Esophagus muscularis mucosa (tissue), 4 donors: ENCODE measurements at regions of chr9 and their contacts with region 1.

Region 1: GRCh38 chr9:5628530-5629311 is at the start of gene RIC1:
- DNase-seq: peak; percentile 98
- H3K4me3 ChIP-seq: peak within 1 kb of the TSS; percentile 77 to 99 (median 94)
- H3K27ac ChIP-seq: peak within 1 kb of the TSS; percentile 98 to 99 (median 98)
- H3K4me1 ChIP-seq: peaks cover 37 to 78% (median 69%) of the 10 kb centered on the region in 4 donors
- H3K27me3 ChIP-seq: no peaks in the 10 kb centered on the region
- CTCF ChIP-seq: peak in 2 of 3 experiments; percentile 5 to 20
- EP300 ChIP-seq: no peak
- POLR2A ChIP-seq: no peak
- total RNA-seq, gene RIC1: 51.6 to 64.9 (median 57.4) TPM

Region 2: GRCh38 chr9:5696884-5697283 is 68.2 kb after region 1 on chr9:
- intact Hi-C with region 1: loop called (anchors 5 kb)
- DNase-seq: no peak
- H3K4me3 ChIP-seq: no peak overlapping the region
- H3K27ac ChIP-seq: no peak overlapping the region
- H3K4me1 ChIP-seq: peaks cover 0 to 50% (median 48%) of the 10 kb centered on the region in 4 donors
- H3K27me3 ChIP-seq: no peaks in the 10 kb centered on the region
- CTCF ChIP-seq: no peak
- EP300 ChIP-seq: no peak
- POLR2A ChIP-seq: no peak

Region 3: DNA sequence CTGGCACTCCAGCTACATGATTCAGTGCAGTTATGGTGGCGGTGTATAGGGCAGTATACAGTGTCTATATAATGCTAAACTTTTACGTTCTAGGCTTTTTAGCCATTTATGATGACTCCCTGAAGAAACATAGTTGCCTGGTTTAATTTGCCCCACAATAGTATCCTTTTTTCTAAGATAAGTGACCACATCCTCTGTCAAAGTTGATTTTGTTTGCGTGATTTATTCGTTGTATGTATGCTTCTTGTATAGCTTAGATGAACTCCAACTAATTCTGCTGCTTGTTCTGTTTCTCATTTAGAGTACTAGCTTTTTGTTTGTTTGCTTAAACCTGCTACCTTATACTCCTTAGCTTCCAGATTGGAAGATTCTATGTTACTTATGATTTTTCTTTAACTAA is 120.6 kb after region 1 on chr9:
- intact Hi-C with region 1: loop called (anchors 10 kb)
- DNase-seq: no peak
- H3K4me3 ChIP-seq: no peak overlapping the region
- H3K27ac ChIP-seq: no peak overlapping the region
- H3K4me1 ChIP-seq: no peaks in the 10 kb centered on the region
- H3K27me3 ChIP-seq: no peaks in the 10 kb centered on the region
- CTCF ChIP-seq: no peak
- EP300 ChIP-seq: no peak
- POLR2A ChIP-seq: no peak

Region 4: DNA sequence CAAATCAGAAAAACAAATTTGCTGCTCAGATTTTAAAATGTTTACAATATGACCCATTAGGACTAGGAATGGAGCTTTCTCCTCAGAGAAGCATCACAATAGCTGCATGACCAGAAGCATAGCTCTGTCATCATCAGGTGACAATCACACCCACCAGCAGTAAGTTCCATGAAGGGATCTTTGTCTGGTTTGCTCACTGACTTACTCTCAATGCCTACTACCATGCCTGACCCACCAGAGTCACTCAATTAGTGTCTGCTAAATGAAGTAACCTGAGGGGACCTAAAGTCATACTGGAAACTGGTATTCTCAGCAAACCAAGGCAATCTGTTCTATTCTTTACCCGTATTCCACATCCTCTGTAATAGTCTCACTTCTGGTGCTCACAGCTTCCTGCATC is 196.5 kb after region 1 on chr9:
- intact Hi-C with region 1: loop called (anchors 5 kb)
- DNase-seq: no peak
- H3K4me3 ChIP-seq: no peak overlapping the region
- H3K27ac ChIP-seq: no peak overlapping the region
- H3K4me1 ChIP-seq: no peaks in the 10 kb centered on the region
- H3K27me3 ChIP-seq: no peaks in the 10 kb centered on the region
- CTCF ChIP-seq: no peak
- EP300 ChIP-seq: no peak
- POLR2A ChIP-seq: no peak

Region 5: GRCh38 chr9:6008169-6008979 is 379.7 kb after region 1 on chr9:
- intact Hi-C with region 1: loop called (anchors 10 kb)
- DNase-seq: peak; percentile 100
- H3K4me3 ChIP-seq: peak overlapping the region; percentile 92 to 98 (median 95)
- H3K27ac ChIP-seq: peak overlapping the region; percentile 99
- H3K4me1 ChIP-seq: peaks cover 39 to 70% (median 61%) of the 10 kb centered on the region in 4 donors
- H3K27me3 ChIP-seq: no peaks in the 10 kb centered on the region
- CTCF ChIP-seq: no peak
- EP300 ChIP-seq: no peak
- POLR2A ChIP-seq: peak; percentile 29